Activated naive CD4-positive, alpha-beta T cell treated with anti-CD3 and anti-CD28 coated beads for 36 hours (primary cell): ENCODE measurements at regions of chr2 and their contacts with region 1.

Region 1: DNA sequence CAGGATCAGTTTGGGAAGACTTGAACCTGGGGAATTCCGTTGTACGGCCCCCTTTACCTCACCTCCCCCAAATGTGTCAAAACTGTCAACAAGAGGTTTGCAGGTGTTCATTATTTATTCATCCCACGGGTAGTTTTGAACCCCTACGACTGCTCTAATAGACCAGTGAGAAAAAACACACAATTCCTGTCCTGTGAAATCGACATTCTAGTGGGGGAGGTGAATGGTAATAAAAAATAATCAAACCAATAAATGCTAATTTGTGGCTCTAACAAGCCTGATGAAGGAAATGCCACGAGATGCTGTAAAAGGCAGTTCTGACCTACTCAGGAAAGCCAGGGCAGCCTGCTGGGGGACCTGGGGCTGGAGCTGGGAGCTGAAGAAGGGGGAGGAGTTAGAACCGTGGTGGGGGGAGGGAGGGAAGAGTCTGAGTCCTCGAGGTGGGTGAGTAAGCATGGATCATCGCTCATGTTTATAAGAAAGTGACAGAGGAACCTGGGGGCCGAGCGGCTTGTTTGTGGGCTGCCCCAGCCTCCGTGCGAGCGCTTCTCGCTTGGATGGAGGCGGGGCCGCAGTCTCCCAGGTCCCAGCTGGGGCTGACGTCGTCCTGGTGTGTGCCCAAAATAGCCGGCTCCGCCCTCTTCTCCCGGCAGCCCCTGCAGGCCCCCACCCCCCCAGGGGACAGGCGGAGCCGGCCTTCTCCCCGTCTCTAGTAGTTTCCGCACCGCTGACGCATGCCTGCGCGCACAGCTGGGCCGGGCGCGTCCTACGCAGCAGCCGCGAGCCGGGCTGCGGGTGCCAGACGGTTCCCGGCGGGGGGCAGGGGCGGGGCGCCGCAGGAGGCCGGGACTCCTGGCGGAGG is at the start of gene DNAJB2:
- DNase-seq: peak; percentile 99
- H3K4me3 Mint-ChIP-seq: peak within 1 kb of the TSS; percentile 92
- H3K27ac Mint-ChIP-seq: peak within 1 kb of the TSS; percentile 95
- H3K4me1 Mint-ChIP-seq: peaks cover 37% of the 10 kb centered on the region
- H3K27me3 Mint-ChIP-seq: no peaks in the 10 kb centered on the region
- total RNA-seq, gene DNAJB2: 24.6 to 24.9 TPM

Region 2: DNA sequence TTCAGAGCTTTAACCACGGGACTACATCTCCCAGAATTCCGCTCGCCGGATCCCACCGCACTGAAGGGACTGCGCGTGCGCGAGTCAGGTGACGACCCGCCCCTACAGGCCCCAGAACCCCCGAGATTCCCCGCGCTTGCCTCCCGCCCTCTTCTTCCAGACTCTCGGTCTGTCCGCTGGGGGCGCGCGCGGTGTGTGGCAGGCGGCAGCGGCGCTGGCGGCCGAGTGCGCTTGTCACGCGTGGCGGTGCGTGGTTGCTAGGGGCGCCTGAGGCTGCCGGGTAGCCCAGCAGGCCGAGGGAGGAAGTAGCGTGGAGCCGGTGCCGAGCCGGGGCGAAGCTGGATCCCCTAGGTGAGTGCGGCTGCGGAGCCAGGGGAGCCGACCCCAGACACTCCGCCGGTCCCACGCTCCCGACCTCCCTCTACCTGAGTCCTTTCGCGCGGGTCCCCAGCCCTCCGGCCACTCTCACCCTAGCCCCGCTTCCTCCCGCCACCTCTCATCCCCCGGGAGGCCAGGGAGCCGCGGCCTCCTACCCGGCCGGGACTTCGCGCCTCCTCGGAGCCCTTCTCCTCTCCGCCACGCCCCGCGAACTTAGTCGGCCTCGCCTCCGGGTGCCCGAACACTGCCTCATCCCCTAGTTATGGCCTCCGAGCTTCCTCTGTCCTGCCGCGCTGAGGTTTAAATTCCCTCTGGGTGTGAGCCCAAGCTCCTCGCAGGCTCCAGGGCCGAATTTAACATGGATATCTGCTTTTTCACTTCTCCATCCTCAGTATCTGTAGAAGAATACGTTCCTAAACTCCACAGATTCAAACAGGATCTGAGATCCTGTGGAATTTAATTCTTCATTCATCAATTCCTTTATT is 568.0 kb before region 1 on chr2 and contains the start of gene TTLL4:
- CTCF ChIA-PET with region 1: no interaction called
- intact Hi-C with region 1: loop called (anchors 1 kb)
- DNase-seq: peak; percentile 99
- H3K4me3 Mint-ChIP-seq: peak within 1 kb of the TSS; percentile 98
- H3K27ac Mint-ChIP-seq: peak within 1 kb of the TSS; percentile 80
- H3K4me1 Mint-ChIP-seq: peaks cover 15% of the 10 kb centered on the region
- H3K27me3 Mint-ChIP-seq: peaks cover 3% of the 10 kb centered on the region
- total RNA-seq, gene TTLL4: 23.7 to 24.7 TPM

Region 3: DNA sequence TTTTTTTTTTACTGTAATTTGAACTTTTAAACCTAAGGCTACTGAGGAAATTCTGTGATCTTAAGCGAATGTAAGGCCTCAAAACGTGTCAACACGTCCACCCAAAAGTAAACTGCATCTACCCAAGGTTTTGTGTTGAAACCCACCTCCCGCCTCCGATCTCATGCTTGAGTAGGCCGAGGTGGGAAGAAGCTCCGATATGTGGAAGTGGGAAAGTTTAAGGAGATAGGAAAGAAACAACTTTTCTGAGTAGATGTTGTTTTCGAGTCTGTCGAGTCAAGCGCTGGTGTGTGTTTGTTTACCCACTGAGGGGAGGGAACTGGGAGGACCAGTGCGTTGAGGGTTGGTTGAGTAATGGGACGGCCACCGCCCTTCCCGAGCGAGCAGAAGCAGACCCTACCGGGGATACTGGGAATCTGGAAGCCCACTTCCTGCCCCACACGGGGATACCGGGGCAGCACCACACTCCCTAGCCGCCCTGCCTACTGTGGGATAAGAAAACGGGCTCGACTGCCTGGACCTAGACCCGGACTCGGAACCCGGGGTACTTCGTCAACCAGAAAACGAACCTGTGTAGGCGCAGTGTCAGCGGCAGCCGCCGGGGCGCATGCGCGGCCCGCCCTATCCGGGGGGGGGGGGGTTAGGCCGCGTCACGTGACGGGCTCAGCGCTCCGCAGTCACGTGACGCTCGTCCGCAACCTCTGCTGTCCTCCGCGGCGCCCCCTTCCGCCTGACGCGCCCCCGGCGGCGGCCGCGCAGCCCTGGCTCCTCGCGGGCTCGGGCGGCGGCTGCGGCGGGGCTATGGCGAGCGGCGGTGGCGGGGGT is 101.1 kb before region 1 on chr2 and contains the start of gene RETREG2:
- CTCF ChIA-PET with region 1: interaction called, 11 read pairs
- intact Hi-C with region 1: loop called (anchors 1 kb)
- DNase-seq: peak; percentile 78
- H3K4me3 Mint-ChIP-seq: peak within 1 kb of the TSS; percentile 94
- H3K27ac Mint-ChIP-seq: peak within 1 kb of the TSS; percentile 98
- H3K4me1 Mint-ChIP-seq: peaks cover 58% of the 10 kb centered on the region
- H3K27me3 Mint-ChIP-seq: no peaks in the 10 kb centered on the region
- total RNA-seq, gene RETREG2: 44.0 to 44.1 TPM

Region 4: DNA sequence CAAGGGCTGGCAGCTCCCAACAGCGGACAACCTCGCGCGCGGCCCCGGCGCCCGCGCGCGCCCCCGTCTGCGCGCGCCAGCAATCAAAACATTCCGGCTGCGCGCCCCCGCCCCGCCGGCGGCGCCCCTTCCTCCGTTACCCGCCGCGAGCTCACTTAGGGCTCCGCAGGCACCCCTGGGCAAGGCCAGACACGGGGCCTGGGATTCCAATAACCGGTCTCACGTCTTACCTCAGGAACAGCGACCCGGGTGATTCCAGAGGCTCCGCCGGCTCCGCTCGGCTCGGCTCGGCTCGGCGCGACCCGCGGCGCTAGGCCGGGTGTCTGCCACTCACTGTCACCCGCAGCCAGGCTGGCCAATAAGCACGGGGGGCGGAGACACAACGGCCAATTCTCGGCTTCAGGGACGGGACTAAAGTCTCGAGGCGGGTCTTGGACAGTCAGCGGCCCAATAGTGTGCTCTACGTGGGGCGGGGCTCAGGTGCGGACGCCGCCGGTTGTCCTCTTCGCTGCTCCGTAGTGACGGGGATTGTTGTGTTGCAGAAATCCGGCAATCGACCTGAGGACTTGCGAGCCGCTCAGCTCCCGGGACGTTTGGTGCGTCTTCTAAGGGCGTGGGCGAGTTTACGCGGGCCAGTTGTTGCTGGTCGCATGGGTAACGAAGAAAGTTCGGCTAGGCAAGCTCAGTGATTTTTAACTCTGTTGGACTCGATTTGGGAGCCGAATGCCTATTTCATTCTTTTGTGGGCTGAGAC is 49.4 kb before region 1 on chr2 and contains the starts of genes ANKZF1 and ATG9A:
- CTCF ChIA-PET with region 1: interaction called, 4 read pairs
- intact Hi-C with region 1: loop called (anchors 1 kb)
- DNase-seq: peak; percentile 99
- H3K4me3 Mint-ChIP-seq: peak within 1 kb of the TSS; percentile 96
- H3K27ac Mint-ChIP-seq: peak within 1 kb of the TSS; percentile 97
- H3K4me1 Mint-ChIP-seq: peaks cover 48% of the 10 kb centered on the region
- H3K27me3 Mint-ChIP-seq: no peaks in the 10 kb centered on the region
- total RNA-seq, gene ANKZF1: 87.7 to 88.5 TPM
- total RNA-seq, gene ATG9A: 26.0 to 27.7 TPM

Region 5: GRCh38 chr2:219266886-219267285 is 12.0 kb before region 1 on chr2:
- CTCF ChIA-PET with region 1: interaction called, 16 read pairs
- intact Hi-C with region 1: no loop called
- DNase-seq: no peak
- H3K4me3 Mint-ChIP-seq: no peak overlapping the region
- H3K27ac Mint-ChIP-seq: no peak overlapping the region
- H3K4me1 Mint-ChIP-seq: no peaks in the 10 kb centered on the region
- H3K27me3 Mint-ChIP-seq: no peaks in the 10 kb centered on the region

Region 6: GRCh38 chr2:219498280-219499057 is 219.6 kb after region 1 on chr2 and contains the start of gene GMPPA:
- CTCF ChIA-PET with region 1: no interaction called
- intact Hi-C with region 1: loop called (anchors 1 kb)
- DNase-seq: peak; percentile 98
- H3K4me3 Mint-ChIP-seq: peak within 1 kb of the TSS; percentile 91
- H3K27ac Mint-ChIP-seq: peak within 1 kb of the TSS; percentile 39
- H3K4me1 Mint-ChIP-seq: peaks cover 28% of the 10 kb centered on the region
- H3K27me3 Mint-ChIP-seq: peaks cover 43% of the 10 kb centered on the region
- total RNA-seq, gene GMPPA: 25.2 to 28.4 TPM

Region 7: GRCh38 chr2:220460257-220460985 is 1181.5 kb after region 1 on chr2:
- CTCF ChIA-PET with region 1: no interaction called
- intact Hi-C with region 1: no loop called
- DNase-seq: no peak
- H3K4me3 Mint-ChIP-seq: no peak overlapping the region
- H3K27ac Mint-ChIP-seq: no peak overlapping the region
- H3K4me1 Mint-ChIP-seq: no peaks in the 10 kb centered on the region
- H3K27me3 Mint-ChIP-seq: no peaks in the 10 kb centered on the region